HCT116 (cell line): ENCODE measurements at regions of chr7 and their contacts with region 1.

Region 1: DNA sequence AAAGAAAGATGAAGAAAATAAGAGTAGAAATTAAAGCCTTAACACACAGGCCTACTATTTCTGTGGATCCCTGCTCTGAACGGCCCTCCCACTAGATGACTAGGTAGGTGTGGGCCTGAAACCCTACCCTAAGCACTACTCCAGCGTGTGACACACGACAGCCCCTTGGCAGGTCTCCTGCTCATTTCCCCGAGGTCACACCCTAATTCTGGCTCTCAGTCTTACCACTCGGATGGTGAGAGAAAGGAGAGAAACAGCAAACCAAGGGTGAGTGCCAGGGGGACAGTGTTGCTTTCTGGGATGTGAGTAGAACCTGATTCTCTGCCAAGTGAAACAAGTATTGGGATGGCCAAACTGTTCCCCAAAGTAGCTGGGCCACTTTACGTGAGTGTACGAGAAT is 12.1 kb downstream of the GALNTL5 start:
- DNase-seq: no peak
- ATAC-seq: no peak
- H3K4me3 ChIP-seq: no peak overlapping the region
- H3K27ac ChIP-seq: no peak overlapping the region
- H3K4me1 ChIP-seq: no peaks in the 10 kb centered on the region
- H3K27me3 ChIP-seq: no peaks in the 10 kb centered on the region
- CTCF ChIP-seq: no peak
- POLR2A ChIP-seq: no peak
- RAD21 ChIP-seq: no peak

Region 2: GRCh38 chr7:151978616-151979015 is 10.3 kb after region 1 on chr7:
- CTCF ChIA-PET with region 1: no interaction called
- POLR2A ChIA-PET with region 1: no interaction called
- RAD21 ChIA-PET with region 1: no interaction called
- intact Hi-C with region 1: loop called (anchors 1 kb)
- DNase-seq: no peak
- ATAC-seq: no peak
- H3K4me3 ChIP-seq: no peak overlapping the region
- H3K27ac ChIP-seq: no peak overlapping the region
- H3K4me1 ChIP-seq: no peaks in the 10 kb centered on the region
- H3K27me3 ChIP-seq: no peaks in the 10 kb centered on the region
- CTCF ChIP-seq: no peak
- POLR2A ChIP-seq: no peak
- RAD21 ChIP-seq: no peak

Region 3: DNA sequence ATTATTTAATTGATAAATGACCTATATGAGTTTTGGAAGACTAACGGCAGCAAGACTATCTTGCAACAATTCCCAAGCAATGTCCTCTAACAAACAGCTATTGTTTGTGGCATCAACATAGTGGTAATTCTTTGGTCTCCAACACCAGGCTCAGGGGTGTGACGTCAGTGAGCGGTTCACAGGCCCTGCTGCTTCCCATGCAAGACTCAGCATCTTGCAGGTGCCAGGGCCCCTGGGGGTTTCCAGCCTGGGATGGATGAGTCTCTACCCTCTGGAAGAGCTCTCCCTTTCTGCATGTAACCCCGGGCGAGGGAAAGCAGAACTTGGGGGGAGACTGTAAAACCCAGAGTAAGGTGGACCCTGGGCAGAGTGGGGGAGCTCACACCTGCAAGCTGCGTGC is 955.9 kb after region 1 on chr7:
- CTCF ChIA-PET with region 1: no interaction called
- POLR2A ChIA-PET with region 1: no interaction called
- RAD21 ChIA-PET with region 1: no interaction called
- intact Hi-C with region 1: no loop called
- DNase-seq: no peak
- ATAC-seq: no peak
- H3K4me3 ChIP-seq: no peak overlapping the region
- H3K27ac ChIP-seq: no peak overlapping the region
- H3K4me1 ChIP-seq: no peaks in the 10 kb centered on the region
- H3K27me3 ChIP-seq: no peaks in the 10 kb centered on the region
- CTCF ChIP-seq: no peak
- POLR2A ChIP-seq: no peak
- RAD21 ChIP-seq: no peak